Common myeloid progenitor, CD34-positive (primary cell): ENCODE measurements at regions of chr1 and their contacts with region 1.

Region 1: GRCh38 chr1:220798353-220798752 is 11.6 kb downstream of the MTARC1 start:
- DNase-seq: no peak
- H3K4me3 ChIP-seq: no peak overlapping the region
- H3K27ac ChIP-seq: no peak overlapping the region
- H3K4me1 ChIP-seq: no peaks in the 10 kb centered on the region
- H3K27me3 ChIP-seq: no peaks in the 10 kb centered on the region

Region 2: DNA sequence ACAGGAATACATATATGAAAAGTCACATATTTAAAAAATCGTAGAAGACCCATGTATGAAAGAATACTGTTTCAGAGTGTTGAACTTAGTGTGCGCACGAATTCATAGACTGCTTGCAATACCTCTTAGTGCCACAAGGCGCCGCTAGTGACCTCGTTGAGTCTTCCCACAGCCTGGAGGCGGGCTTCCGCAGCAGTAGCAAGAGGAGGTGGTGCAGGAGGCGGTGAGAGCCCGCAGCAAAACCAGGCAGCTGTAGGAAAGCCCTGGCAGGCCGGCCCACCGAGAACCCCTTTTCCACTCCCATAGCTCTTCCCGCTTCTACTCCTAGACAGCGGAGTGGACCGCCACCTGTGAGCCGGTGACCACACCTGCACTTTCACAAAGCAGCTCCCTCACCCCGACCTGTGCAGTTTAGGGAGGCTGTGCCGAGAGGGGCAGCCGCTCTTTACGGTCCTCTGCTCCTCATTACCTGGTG is 11.9 kb after region 1 on chr1:
- CTCF ChIA-PET with region 1: interaction called, 17 read pairs
- POLR2A ChIA-PET with region 1: no interaction called
- DNase-seq: peak; percentile 80 to 92 (median 88)
- H3K4me3 ChIP-seq: peak overlapping the region in 5 of 7 experiments; percentile 27 to 67 (median 58)
- H3K27ac ChIP-seq: no peak overlapping the region
- H3K4me1 ChIP-seq: peaks cover 0 to 5% (median 2%) of the 10 kb centered on the region in 4 experiments
- H3K27me3 ChIP-seq: no peaks in the 10 kb centered on the region